Esophagus muscularis mucosa (tissue), 4 donors: ENCODE measurements at regions of chr6 and their contacts with region 1.

Region 1: GRCh38 chr6:154509421-154510142 is 903 bp downstream of the CNKSR3 start:
- DNase-seq: no peak
- H3K4me3 ChIP-seq: peak overlapping the region; percentile 71 to 94 (median 86)
- H3K27ac ChIP-seq: peak overlapping the region; percentile 94 to 98 (median 96)
- H3K4me1 ChIP-seq: peaks cover 31 to 59% (median 55%) of the 10 kb centered on the region in 4 donors
- H3K27me3 ChIP-seq: no peaks in the 10 kb centered on the region
- CTCF ChIP-seq: no peak
- EP300 ChIP-seq: no peak
- POLR2A ChIP-seq: no peak

Region 2: DNA sequence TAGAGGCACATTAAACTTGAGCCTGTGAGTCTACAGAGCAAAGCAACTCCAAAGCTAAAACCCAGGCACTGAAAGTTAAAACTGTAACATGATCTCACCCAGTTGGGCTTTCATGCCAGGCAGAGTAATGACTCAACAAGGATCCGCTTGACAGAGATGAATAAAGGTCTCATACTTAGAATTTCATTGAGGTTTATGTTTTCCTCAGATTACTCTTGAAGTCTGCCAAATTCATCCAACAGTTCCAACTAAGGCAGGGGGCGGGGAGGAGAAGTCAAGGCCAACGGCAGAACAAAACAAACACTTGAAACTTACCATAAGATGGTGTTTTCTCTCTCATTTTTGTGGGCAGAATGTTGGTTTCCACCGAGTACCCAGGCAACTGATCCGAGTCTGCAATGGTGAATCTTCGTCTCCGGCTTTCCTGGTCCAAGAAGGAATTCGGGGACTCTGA is 98.9 kb before region 1 on chr6:
- intact Hi-C with region 1: loop called (anchors 5 kb)
- DNase-seq: no peak
- H3K4me3 ChIP-seq: peak overlapping the region in 2 of 4 donors; percentile 10 to 18
- H3K27ac ChIP-seq: peak overlapping the region; percentile 84 to 89 (median 86)
- H3K4me1 ChIP-seq: peaks cover 29 to 48% (median 46%) of the 10 kb centered on the region in 4 donors
- H3K27me3 ChIP-seq: no peaks in the 10 kb centered on the region
- CTCF ChIP-seq: no peak
- EP300 ChIP-seq: no peak
- POLR2A ChIP-seq: no peak

Region 3: GRCh38 chr6:154448448-154449096 is 61.0 kb before region 1 on chr6:
- intact Hi-C with region 1: loop called (anchors 5 kb)
- DNase-seq: no peak
- H3K4me3 ChIP-seq: peak overlapping the region in 3 of 4 donors; percentile 5 to 24 (median 16)
- H3K27ac ChIP-seq: peak overlapping the region; percentile 75 to 84 (median 80)
- H3K4me1 ChIP-seq: peaks cover 32 to 66% (median 55%) of the 10 kb centered on the region in 4 donors
- H3K27me3 ChIP-seq: no peaks in the 10 kb centered on the region
- CTCF ChIP-seq: peak in 1 of 3 experiments; percentile 60
- EP300 ChIP-seq: peak; percentile 82
- POLR2A ChIP-seq: no peak

Region 4: GRCh38 chr6:155274533-155274932 is 765.0 kb after region 1 on chr6:
- intact Hi-C with region 1: no loop called
- DNase-seq: no peak
- H3K4me3 ChIP-seq: no peak overlapping the region
- H3K27ac ChIP-seq: peak overlapping the region; percentile 48 to 65 (median 58)
- H3K4me1 ChIP-seq: peaks cover 31 to 45% (median 43%) of the 10 kb centered on the region in 4 donors
- H3K27me3 ChIP-seq: no peaks in the 10 kb centered on the region
- CTCF ChIP-seq: no peak
- EP300 ChIP-seq: no peak
- POLR2A ChIP-seq: no peak